ENCODE measurements at regions of chr18 and their contacts with region 1.

Region 1: GRCh38 chr18:11908182-11909060 is at the start of gene MPPE1:
- DNase-seq: peak; percentile 67 to 94 (median 82)
- ATAC-seq: peak; percentile 90
- H3K4me3 ChIP-seq: peak within 1 kb of the TSS; percentile 89
- H3K4me3 Mint-ChIP-seq: peak within 1 kb of the TSS; percentile 97
- H3K27ac ChIP-seq: peak within 1 kb of the TSS; percentile 89 to 94
- H3K27ac Mint-ChIP-seq: peak within 1 kb of the TSS; percentile 98
- H3K4me1 ChIP-seq: peaks cover 24% of the 10 kb centered on the region
- H3K4me1 Mint-ChIP-seq: peaks cover 31% of the 10 kb centered on the region
- H3K27me3 ChIP-seq: no peaks in the 10 kb centered on the region
- H3K27me3 Mint-ChIP-seq: no peaks in the 10 kb centered on the region
- CTCF ChIP-seq: no peak
- total RNA-seq, gene MPPE1: 62.6 to 68.3 TPM

Region 2: DNA sequence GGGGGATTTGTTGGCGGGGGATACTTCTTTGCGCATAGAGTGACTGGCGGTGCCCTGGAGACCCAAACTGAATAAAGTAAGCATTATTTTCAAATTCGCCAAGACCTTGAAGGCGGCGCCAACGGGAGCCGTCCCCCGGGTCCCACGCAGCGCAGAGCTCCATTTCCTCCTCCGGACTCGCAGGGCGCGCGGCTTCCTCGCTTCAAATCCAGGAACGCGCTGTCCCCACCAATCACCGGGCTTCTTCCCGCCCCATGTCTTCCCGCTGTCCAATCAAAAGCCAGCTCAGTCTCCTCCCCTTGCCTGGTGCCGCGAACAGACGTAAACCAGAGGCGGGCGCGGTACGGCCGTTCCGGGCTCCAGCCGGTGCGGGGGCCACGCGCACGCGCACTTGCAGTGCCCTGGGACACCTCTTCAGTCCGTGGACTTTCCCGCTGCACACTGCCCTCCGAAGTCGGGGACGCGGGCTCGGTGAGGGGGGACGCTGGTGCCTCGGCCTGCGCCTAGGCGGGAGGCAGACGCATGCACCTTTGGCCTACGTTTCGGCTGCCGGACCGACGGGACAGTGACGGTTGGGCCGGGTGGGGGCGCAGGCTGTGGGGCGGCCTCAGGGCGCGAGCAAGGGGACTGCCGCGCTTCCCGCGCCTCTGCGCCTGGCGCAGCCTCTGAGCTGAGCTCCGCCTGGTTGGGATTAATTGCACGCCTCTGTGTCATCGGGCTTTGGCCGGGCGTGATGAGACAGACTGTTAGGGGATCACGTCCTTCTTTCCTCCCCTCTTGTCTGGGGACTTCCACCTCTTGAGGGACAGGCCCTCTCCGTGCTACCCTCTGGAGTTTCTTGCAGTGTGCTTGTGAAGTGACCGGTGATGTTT is 1082.8 kb after region 1 on chr18 and contains the start of gene CEP192:
- CTCF ChIA-PET with region 1: no interaction called
- POLR2A ChIA-PET with region 1: no interaction called
- intact Hi-C with region 1: loop called in 1 of 2 experiments (anchors 5 kb)
- DNase-seq: peak; percentile 94 to 99 (median 95)
- ATAC-seq: peak; percentile 97
- H3K4me3 ChIP-seq: peak within 1 kb of the TSS; percentile 85
- H3K4me3 Mint-ChIP-seq: no peak within 1 kb of the TSS
- H3K27ac ChIP-seq: peak within 1 kb of the TSS; percentile 61 to 84
- H3K27ac Mint-ChIP-seq: peak within 1 kb of the TSS; percentile 83
- H3K4me1 ChIP-seq: peaks cover 32% of the 10 kb centered on the region
- H3K4me1 Mint-ChIP-seq: peaks cover 21% of the 10 kb centered on the region
- H3K27me3 ChIP-seq: no peaks in the 10 kb centered on the region
- H3K27me3 Mint-ChIP-seq: no peaks in the 10 kb centered on the region
- CTCF ChIP-seq: no peak
- total RNA-seq, gene CEP192: 23.4 to 25.0 TPM

Measured in CD4-positive, alpha-beta T cell (primary cell).